GM12878 (cell line): ENCODE measurements at regions of chr18 and their contacts with region 1.

Region 1: GRCh38 chr18:36572135-36572856 is 256.5 kb downstream of the TPGS2 start:
- DNase-seq: peak; percentile 38
- ATAC-seq: peak; percentile 87
- H3K4me3 ChIP-seq: no peak overlapping the region
- H3K27ac ChIP-seq: no peak overlapping the region
- H3K4me1 ChIP-seq: no peaks in the 10 kb centered on the region
- H3K27me3 ChIP-seq: no peaks in the 10 kb centered on the region
- CTCF ChIP-seq: peak; percentile 55 to 74 (median 55)
- EP300 ChIP-seq: no peak
- POLR2A ChIP-seq: no peak
- RAD21 ChIP-seq: peak; percentile 76

Region 2: GRCh38 chr18:36366994-36367839 is 205.1 kb before region 1 on chr18:
- CTCF ChIA-PET with region 1: interaction called, 13 read pairs
- POLR2A ChIA-PET with region 1: interaction called, 3 read pairs
- RAD21 ChIA-PET with region 1: interaction called, 8 read pairs
- SMC1A ChIA-PET with region 1: interaction called, 19 read pairs
- in situ Hi-C with region 1: no loop called
- intact Hi-C with region 1: no loop called
- DNase-seq: peak; percentile 82
- ATAC-seq: peak; percentile 80
- H3K4me3 ChIP-seq: no peak overlapping the region
- H3K27ac ChIP-seq: peak overlapping the region; percentile 72
- H3K4me1 ChIP-seq: peaks cover 14% of the 10 kb centered on the region
- H3K27me3 ChIP-seq: no peaks in the 10 kb centered on the region
- CTCF ChIP-seq: no peak
- EP300 ChIP-seq: peak in 1 of 2 experiments; percentile 30; a peak in 1 of 4 replicates
- POLR2A ChIP-seq: no peak
- RAD21 ChIP-seq: no peak

Region 3: DNA sequence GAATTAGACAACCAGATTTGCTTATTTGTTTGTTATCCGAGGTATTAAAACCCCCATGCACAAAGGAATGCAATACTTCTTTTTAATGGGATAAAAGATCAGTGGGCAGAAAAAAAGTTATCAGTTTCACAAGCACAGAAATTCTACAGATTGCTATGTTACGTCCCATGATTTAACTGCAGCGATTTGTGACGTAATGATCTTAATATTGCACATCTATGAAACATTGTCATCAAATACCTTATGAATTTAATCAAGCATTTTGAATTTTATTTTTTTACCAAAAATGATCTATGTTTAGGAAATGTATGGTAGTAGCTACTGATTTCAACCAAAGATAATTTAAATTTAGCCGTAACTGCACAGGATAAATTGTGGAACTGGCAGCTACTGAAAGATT is 135.9 kb before region 1 on chr18:
- CTCF ChIA-PET with region 1: interaction called, 27 read pairs
- POLR2A ChIA-PET with region 1: interaction called, 4 read pairs
- RAD21 ChIA-PET with region 1: interaction called, 5 read pairs
- SMC1A ChIA-PET with region 1: interaction called, 9 read pairs
- in situ Hi-C with region 1: no loop called
- intact Hi-C with region 1: no loop called
- DNase-seq: no peak
- ATAC-seq: no peak
- H3K4me3 ChIP-seq: no peak overlapping the region
- H3K27ac ChIP-seq: no peak overlapping the region
- H3K4me1 ChIP-seq: no peaks in the 10 kb centered on the region
- H3K27me3 ChIP-seq: no peaks in the 10 kb centered on the region
- CTCF ChIP-seq: no peak
- EP300 ChIP-seq: no peak
- POLR2A ChIP-seq: no peak
- RAD21 ChIP-seq: no peak

Region 4: GRCh38 chr18:36493349-36494159 is 78.7 kb before region 1 on chr18:
- CTCF ChIA-PET with region 1: interaction called, 23 read pairs
- POLR2A ChIA-PET with region 1: interaction called, 4 read pairs
- RAD21 ChIA-PET with region 1: interaction called, 18 read pairs
- SMC1A ChIA-PET with region 1: interaction called, 9 read pairs
- in situ Hi-C with region 1: no loop called
- intact Hi-C with region 1: no loop called
- DNase-seq: no peak
- ATAC-seq: peak; percentile 81
- H3K4me3 ChIP-seq: no peak overlapping the region
- H3K27ac ChIP-seq: no peak overlapping the region
- H3K4me1 ChIP-seq: peaks cover 7% of the 10 kb centered on the region
- H3K27me3 ChIP-seq: no peaks in the 10 kb centered on the region
- CTCF ChIP-seq: no peak
- EP300 ChIP-seq: no peak; a peak in 1 of 4 replicates
- POLR2A ChIP-seq: no peak
- RAD21 ChIP-seq: no peak

Region 5: DNA sequence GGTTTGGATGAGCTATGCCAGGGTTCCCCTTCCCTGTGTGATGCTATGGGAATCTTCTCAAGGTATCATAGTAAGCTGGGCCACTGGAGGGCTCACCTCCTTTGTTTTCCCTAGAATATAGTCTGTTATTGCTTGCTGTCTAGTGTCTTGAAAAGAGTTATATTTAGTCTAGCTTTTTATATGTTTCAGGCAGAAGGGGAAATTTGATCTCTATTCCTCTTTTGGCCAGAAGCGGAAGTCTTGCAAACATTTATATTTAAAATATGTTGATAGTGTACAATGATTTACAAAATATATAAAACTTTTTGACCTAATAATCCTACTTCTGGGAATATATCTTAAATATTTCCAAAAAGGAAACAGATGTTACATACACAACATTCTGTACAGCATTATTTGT is 14.1 kb before region 1 on chr18:
- CTCF ChIA-PET with region 1: interaction called, 50 read pairs
- POLR2A ChIA-PET with region 1: no interaction called
- RAD21 ChIA-PET with region 1: interaction called, 18 read pairs
- SMC1A ChIA-PET with region 1: interaction called, 27 read pairs
- in situ Hi-C with region 1: no loop called
- intact Hi-C with region 1: no loop called
- DNase-seq: no peak
- ATAC-seq: no peak
- H3K4me3 ChIP-seq: no peak overlapping the region
- H3K27ac ChIP-seq: no peak overlapping the region
- H3K4me1 ChIP-seq: no peaks in the 10 kb centered on the region
- H3K27me3 ChIP-seq: no peaks in the 10 kb centered on the region
- CTCF ChIP-seq: no peak
- EP300 ChIP-seq: no peak
- POLR2A ChIP-seq: no peak
- RAD21 ChIP-seq: no peak

Region 6: GRCh38 chr18:36661999-36662398 is 89.7 kb after region 1 on chr18:
- CTCF ChIA-PET with region 1: no interaction called
- POLR2A ChIA-PET with region 1: no interaction called
- RAD21 ChIA-PET with region 1: no interaction called
- SMC1A ChIA-PET with region 1: no interaction called
- in situ Hi-C with region 1: no loop called
- intact Hi-C with region 1: loop called (anchors 1 kb)
- DNase-seq: no peak
- ATAC-seq: peak; percentile 58
- H3K4me3 ChIP-seq: no peak overlapping the region
- H3K27ac ChIP-seq: no peak overlapping the region
- H3K4me1 ChIP-seq: no peaks in the 10 kb centered on the region
- H3K27me3 ChIP-seq: no peaks in the 10 kb centered on the region
- CTCF ChIP-seq: peak; percentile 35 to 47 (median 43); a peak in 4 of 6 replicates
- EP300 ChIP-seq: no peak
- POLR2A ChIP-seq: no peak
- RAD21 ChIP-seq: peak; percentile 78

Region 7: DNA sequence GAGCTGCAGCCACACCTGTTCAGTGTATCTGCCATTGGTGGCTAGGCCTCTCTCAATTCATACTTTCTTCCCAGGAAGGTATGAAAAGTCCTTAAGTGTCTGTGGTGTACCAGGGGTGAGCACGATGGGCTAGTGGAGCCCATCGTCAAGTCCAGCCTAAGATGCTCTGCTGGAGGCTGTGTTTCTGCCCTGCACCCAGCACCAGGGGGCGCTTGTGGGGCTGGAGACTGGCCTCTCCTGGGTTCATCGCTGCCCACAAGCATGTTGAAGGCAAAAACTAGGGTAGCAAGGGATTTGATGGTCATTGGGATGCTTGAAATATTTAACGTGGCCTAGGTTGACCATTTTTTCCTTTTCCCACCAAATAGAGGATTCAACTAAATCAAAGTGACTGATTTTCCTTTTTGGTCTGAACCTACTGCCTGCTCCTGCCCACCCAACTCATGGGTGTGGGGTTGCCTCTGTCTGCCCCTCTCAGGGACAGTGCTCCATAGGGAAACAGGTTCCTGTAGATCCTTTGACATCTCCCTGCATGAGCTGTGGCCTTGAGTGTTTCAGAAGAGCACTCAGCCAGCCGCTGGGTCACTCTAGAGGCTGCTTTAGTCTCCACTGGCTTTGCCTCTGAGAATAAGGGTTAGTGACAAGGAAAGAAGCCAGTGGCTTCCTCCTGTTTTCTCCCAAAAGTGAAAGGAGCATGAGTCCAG is 197.5 kb after region 1 on chr18:
- CTCF ChIA-PET with region 1: no interaction called
- POLR2A ChIA-PET with region 1: no interaction called
- RAD21 ChIA-PET with region 1: no interaction called
- SMC1A ChIA-PET with region 1: no interaction called
- in situ Hi-C with region 1: no loop called
- intact Hi-C with region 1: no loop called
- DNase-seq: no peak
- ATAC-seq: peak; percentile 78
- H3K4me3 ChIP-seq: no peak overlapping the region
- H3K27ac ChIP-seq: no peak overlapping the region
- H3K4me1 ChIP-seq: no peaks in the 10 kb centered on the region
- H3K27me3 ChIP-seq: no peaks in the 10 kb centered on the region
- CTCF ChIP-seq: peak; percentile 26 to 60 (median 43)
- EP300 ChIP-seq: no peak
- POLR2A ChIP-seq: no peak
- RAD21 ChIP-seq: no peak

Region 8: DNA sequence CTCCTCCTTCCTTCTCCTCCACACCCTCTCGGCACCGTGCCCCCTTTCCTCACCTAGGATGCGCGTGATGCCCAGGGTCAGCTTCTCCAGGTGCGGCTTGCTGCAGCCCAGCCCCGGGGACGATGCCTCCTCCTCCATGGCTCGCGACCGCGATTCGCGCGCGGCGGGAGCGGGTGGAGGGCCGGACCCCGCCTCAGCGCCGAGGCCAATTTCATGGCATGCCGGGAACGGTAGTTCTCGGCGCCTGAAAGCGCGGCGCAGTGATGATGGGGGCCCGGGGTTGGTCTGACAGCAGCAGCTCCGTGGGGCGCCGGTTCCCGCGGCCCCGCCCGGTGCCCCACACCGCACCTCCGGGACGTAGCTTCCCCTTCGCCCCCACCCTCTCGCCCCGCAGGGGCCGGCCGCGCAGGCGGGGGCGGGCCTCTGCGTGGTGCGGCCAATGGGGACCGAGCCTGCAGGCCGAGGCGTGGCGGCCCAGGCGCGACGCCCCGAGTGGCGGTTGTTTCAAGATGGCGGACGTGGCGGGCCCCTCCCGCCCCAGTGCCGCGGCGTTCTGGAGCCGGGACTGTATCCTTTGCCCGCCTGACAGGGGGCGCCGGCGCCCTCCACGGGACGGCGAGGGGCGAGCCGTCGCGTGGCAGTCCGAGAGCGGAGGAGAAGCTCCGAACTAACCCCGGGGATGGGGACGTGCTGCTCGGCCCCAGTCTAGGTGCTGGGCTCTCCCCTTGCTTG is 256.5 kb after region 1 on chr18 and contains the starts of genes KIAA1328 and TPGS2:
- CTCF ChIA-PET with region 1: no interaction called
- POLR2A ChIA-PET with region 1: no interaction called
- RAD21 ChIA-PET with region 1: no interaction called
- SMC1A ChIA-PET with region 1: no interaction called
- in situ Hi-C with region 1: no loop called
- intact Hi-C with region 1: no loop called
- DNase-seq: peak; percentile 52
- ATAC-seq: peak; percentile 96
- H3K4me3 ChIP-seq: peak within 1 kb of the TSS; percentile 98
- H3K27ac ChIP-seq: peak within 1 kb of the TSS; percentile 71
- H3K4me1 ChIP-seq: no peaks in the 10 kb centered on the region
- H3K27me3 ChIP-seq: no peaks in the 10 kb centered on the region
- CTCF ChIP-seq: peak; percentile 56 to 58 (median 57)
- EP300 ChIP-seq: no peak
- POLR2A ChIP-seq: peak; percentile 83
- RAD21 ChIP-seq: peak; percentile 41; the same call in 1 of the 2 replicates
- polyA plus RNA-seq, gene KIAA1328: 3.1 to 4.1 TPM
- polyA plus RNA-seq, gene TPGS2: 39.8 to 43.5 TPM